OCI-LY7 (cell line): ENCODE measurements at regions of chr2 and their contacts with region 1.

Region 1: GRCh38 chr2:98012561-98012991 is 16.8 kb upstream of the TMEM131 start:
- DNase-seq: peak; percentile 88
- H3K4me3 ChIP-seq: peak overlapping the region; percentile 61
- H3K27ac ChIP-seq: peak overlapping the region; percentile 89
- H3K4me1 ChIP-seq: peaks cover 82% of the 10 kb centered on the region
- CTCF ChIP-seq: no peak

Region 2: DNA sequence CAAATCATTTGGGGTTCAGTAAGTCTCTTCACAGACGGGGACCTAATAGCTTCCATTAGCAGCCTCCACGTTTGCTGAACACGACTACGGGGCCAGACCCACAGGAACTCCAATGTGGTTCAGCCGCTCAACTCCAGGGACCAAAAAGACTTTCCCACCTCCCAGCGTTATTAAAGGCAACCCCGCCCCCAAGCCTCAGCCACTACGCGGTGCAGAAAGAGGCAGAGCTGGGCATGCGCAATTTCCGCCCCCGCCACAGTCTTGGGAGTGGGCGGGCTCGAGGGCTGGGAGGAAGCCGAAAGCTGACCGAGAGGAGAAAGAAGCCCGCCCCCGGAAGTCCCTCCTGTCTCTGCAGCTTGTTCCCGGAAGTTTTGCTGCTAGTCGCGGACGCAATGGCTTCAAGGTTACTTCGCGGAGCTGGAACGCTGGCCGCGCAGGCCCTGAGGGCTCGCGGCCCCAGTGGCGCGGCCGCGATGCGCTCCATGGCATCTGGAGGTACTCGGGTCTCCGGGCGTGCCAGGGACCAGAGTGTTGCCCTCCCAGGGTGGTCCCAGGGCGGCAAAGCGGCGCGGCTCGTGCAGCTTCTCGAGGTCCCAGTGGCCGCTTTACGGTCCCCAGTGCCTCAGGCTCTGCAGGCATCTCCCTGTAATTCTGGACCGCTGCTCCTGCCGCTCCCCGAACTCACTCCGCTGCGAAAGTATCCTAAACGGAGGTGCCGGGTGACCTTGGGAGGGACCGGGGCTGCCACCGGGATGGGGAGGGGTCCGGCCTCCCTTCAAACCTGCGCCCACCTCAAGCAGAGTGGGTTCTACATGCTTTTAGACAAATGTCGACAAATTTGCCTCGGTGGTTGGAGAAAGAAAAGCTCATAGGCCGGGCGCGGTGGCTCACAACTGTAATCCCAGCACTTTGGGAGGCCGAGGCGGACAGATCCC is 366.6 kb before region 1 on chr2 and contains the start of gene COX5B:
- CTCF ChIA-PET with region 1: no interaction called
- POLR2A ChIA-PET with region 1: no interaction called
- intact Hi-C with region 1: no loop called
- DNase-seq: peak; percentile 98
- H3K4me3 ChIP-seq: peak within 1 kb of the TSS; percentile 88
- H3K27ac ChIP-seq: peak within 1 kb of the TSS; percentile 28
- H3K4me1 ChIP-seq: peaks cover 20% of the 10 kb centered on the region
- CTCF ChIP-seq: no peak
- total RNA-seq, gene COX5B: 237 and 276 TPM in 2 replicates

Region 3: GRCh38 chr2:97718051-97718882 is 294.3 kb before region 1 on chr2:
- CTCF ChIA-PET with region 1: no interaction called
- POLR2A ChIA-PET with region 1: no interaction called
- intact Hi-C with region 1: no loop called
- DNase-seq: peak; percentile 81
- H3K4me3 ChIP-seq: peak overlapping the region; percentile 43
- H3K27ac ChIP-seq: peak overlapping the region; percentile 32
- H3K4me1 ChIP-seq: peaks cover 34% of the 10 kb centered on the region
- CTCF ChIP-seq: no peak

Region 4: GRCh38 chr2:97988722-97989121 is 23.9 kb before region 1 on chr2:
- CTCF ChIA-PET with region 1: no interaction called
- POLR2A ChIA-PET with region 1: no interaction called
- intact Hi-C with region 1: no loop called
- DNase-seq: no peak
- H3K4me3 ChIP-seq: no peak overlapping the region
- H3K27ac ChIP-seq: no peak overlapping the region
- H3K4me1 ChIP-seq: peaks cover 52% of the 10 kb centered on the region
- CTCF ChIP-seq: no peak

Region 5: DNA sequence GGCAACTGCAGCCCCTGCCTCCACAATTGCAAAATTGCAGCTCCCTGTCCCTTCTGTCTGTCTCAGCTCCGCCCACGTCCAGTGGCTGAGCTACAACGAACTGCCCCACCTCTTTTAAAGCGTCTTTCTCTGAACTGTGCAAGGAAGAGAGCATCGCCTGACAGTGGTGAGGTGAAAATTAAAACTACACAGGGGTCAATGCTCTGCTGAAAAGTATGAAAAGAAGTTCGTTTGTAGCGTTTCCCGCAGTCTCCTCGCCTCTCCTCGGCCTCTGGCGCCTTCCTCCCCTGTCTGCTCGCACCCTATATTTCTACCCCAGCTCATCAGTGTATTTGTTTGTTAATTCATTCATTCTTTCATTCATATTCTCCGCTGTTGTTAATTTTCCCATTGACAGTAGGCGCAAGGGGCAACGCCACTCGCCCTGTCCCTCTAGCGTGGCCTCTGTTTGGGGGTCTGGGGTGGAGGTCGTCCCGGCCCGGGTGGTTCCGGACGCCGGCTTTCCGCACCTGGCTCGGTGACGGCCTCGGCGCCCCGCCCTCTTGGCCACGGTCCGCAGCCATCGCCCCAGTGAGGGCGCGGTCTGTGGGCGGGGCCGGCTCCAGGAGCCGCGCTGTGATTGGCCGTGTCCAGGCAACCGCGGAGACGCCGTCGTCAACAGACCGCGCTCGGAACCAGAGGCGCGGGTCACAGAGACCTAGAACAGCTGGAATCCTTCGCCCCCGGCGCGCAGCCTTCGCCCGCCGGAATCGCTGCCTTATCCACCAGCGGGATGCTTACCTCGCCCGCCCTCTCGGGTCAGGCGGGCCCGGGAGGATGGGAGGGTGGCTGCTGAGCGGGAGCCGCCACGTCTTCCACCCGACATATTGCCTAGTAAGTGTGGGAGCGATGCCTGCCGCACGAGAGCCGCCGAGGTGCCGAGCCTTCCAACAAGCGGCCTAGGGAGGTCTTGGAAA is 74.2 kb after region 1 on chr2 and contains the start of gene VWA3B:
- CTCF ChIA-PET with region 1: no interaction called
- POLR2A ChIA-PET with region 1: no interaction called
- intact Hi-C with region 1: loop called (anchors 1 kb)
- DNase-seq: peak; percentile 70
- H3K4me3 ChIP-seq: peak within 1 kb of the TSS; percentile 73
- H3K27ac ChIP-seq: no peak within 1 kb of the TSS
- H3K4me1 ChIP-seq: peaks cover 45% of the 10 kb centered on the region
- CTCF ChIP-seq: no peak
- total RNA-seq, gene VWA3B: not detected in 2 replicates